Common myeloid progenitor, CD34-positive (primary cell): ENCODE measurements at regions of chrX and their contacts with region 1.

Region 1: DNA sequence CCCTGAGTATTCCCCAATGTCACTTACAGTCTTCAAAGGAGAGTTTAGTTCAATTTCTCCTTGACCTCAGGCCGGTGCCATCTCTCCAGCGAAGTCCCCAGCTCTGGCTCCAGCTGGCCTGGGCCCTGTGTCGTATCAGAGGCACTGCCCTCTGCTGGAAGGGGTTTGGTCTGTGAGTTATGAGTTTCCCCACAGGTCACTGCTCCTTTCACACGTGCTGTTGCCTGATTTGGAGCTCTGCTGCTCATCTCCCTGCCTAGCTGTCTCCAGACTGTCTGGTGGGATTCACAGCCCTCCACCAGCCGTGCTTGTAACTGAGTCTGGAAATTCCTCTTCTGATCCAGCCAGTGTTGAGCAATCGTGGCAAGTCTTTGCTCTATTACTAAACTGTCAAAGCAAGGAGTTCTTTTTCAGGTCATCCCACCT is at the start of gene RAP2C:
- DNase-seq: peak; percentile 63 to 74 (median 71)
- H3K4me3 ChIP-seq: peak within 1 kb of the TSS; percentile 31 to 90 (median 72)
- H3K27ac ChIP-seq: peak within 1 kb of the TSS; percentile 82 to 93
- H3K4me1 ChIP-seq: peaks cover 3 to 26% (median 18%) of the 10 kb centered on the region in 4 experiments
- H3K27me3 ChIP-seq: peaks cover 0 to 4% (median 0%) of the 10 kb centered on the region in 5 experiments

Region 2: DNA sequence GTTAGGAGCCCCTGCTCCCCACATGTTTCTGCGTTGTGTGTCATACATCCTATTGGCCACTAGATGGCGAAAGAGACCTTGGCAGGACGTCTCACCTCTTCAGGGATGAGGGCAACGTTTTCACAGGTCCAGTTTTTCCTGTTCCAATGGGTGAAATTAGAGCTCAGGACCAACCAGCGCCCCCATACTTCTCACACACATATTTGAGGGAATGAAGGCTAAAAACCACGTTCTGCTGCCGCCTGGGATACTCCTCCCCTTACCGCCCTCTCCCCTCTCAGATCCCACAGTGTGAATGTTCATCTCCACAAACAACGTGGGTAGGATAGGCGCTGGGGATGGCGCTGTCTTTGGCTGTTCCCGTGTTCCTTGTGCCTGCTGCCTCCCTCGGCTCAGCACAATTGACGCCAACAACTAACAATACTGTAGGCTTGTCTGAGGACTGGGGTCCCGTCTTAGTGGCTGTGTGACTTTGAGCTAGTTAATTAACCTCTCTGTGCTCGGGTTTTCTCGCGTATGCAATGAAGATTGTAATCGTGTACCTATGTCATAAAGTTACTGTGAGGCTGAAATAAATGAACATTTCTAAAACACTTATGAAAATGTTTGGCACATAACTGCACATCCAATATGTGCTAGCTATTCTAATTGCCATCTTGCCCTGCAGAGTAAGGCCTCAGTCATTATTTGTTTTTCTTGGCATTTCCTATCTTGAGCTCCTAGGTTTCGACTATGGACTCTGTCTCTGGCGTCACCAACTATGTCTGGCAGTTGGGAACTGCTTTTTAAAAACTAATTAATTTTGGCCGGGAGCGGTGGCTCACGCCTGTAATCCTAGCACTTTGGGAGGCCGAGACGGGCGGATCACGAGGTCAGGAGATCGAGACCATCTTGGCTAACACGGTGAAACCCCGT is 377.6 kb before region 1 on chrX:
- CTCF ChIA-PET with region 1: interaction called, 13 read pairs
- POLR2A ChIA-PET with region 1: no interaction called
- DNase-seq: peak; percentile 58 to 75 (median 75)
- H3K4me3 ChIP-seq: peak overlapping the region in 3 of 7 experiments; percentile 1 to 31 (median 10)
- H3K27ac ChIP-seq: no peak overlapping the region
- H3K4me1 ChIP-seq: peaks cover 0 to 2% (median 0%) of the 10 kb centered on the region in 4 experiments
- H3K27me3 ChIP-seq: peaks cover 0 to 9% (median 0%) of the 10 kb centered on the region in 5 experiments

Region 3: DNA sequence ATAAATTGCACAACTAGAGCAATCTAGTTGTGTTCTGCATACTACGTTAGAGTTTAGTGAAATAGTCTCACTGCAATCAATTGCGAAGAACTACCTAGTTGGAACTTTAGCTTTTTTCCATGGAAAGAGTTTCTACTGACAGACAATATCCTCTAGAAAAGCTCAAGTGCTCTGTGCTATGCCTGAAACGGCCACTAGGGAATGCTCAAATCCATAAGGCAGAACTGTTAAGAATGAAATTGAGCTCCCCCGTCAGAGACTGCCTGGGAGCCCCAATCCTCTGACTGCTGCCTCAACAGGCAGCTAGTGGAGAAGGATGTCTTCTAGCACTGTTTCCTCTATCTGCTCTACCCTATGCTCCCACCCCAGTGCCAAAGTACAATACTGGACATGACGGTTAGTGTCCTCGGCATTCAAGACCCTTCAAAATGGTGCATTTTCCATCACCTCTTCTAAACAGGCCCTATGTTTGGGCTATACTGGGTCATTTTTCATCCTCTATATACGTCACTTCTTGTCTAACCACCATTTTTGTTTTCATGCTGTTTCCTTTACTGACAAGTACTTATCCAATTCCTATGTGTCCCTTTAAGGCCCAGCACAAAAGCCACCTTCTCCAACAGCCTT is 126.8 kb before region 1 on chrX:
- CTCF ChIA-PET with region 1: interaction called, 38 read pairs
- POLR2A ChIA-PET with region 1: no interaction called
- DNase-seq: peak; percentile 58 to 77 (median 72)
- H3K4me3 ChIP-seq: no peak overlapping the region
- H3K27ac ChIP-seq: no peak overlapping the region
- H3K4me1 ChIP-seq: peaks cover 0 to 9% (median 7%) of the 10 kb centered on the region in 4 experiments
- H3K27me3 ChIP-seq: peaks cover 0 to 12% (median 0%) of the 10 kb centered on the region in 5 experiments

Region 4: GRCh38 chrX:132199941-132200340 is 19.4 kb before region 1 on chrX:
- CTCF ChIA-PET with region 1: no interaction called
- POLR2A ChIA-PET with region 1: no interaction called
- DNase-seq: no peak
- H3K4me3 ChIP-seq: no peak overlapping the region
- H3K27ac ChIP-seq: no peak overlapping the region
- H3K4me1 ChIP-seq: no peaks in the 10 kb centered on the region
- H3K27me3 ChIP-seq: peaks cover 0 to 2% (median 0%) of the 10 kb centered on the region in 5 experiments

Region 5: DNA sequence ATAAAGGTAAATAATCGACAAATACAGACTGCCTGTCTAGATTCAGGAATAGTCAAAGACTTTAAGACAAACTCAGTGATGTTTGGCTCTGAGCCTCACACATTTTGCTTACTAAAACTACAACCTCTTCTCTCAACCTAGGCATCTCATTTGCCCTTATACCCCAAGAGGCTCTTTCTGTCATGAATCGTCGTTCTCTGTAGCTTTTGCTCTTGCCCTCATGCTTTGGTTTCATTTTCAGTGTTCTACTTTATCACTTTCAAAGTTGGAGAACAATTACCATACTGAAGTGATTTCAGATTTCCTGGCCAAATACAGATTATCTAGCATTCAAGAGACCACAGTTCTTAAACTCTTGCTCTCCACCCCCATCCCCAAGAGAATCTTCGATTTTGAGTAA is 114.0 kb after region 1 on chrX:
- CTCF ChIA-PET with region 1: no interaction called
- POLR2A ChIA-PET with region 1: no interaction called
- DNase-seq: no peak
- H3K4me3 ChIP-seq: no peak overlapping the region
- H3K27ac ChIP-seq: no peak overlapping the region
- H3K4me1 ChIP-seq: no peaks in the 10 kb centered on the region
- H3K27me3 ChIP-seq: no peaks in the 10 kb centered on the region